ENCODE measurements at regions of chr9 and their contacts with region 1.

Region 1: GRCh38 chr9:89929673-89930480 is 325.1 kb downstream of the GADD45G start:
- DNase-seq: peak in 1 of 3 donors; percentile 36
- ATAC-seq: peak; percentile 65 to 85
- H3K4me3 ChIP-seq: no peak overlapping the region
- H3K27ac ChIP-seq: no peak overlapping the region
- H3K4me1 ChIP-seq: peaks cover 13% of the 10 kb centered on the region
- H3K27me3 ChIP-seq: no peaks in the 10 kb centered on the region

Region 2: DNA sequence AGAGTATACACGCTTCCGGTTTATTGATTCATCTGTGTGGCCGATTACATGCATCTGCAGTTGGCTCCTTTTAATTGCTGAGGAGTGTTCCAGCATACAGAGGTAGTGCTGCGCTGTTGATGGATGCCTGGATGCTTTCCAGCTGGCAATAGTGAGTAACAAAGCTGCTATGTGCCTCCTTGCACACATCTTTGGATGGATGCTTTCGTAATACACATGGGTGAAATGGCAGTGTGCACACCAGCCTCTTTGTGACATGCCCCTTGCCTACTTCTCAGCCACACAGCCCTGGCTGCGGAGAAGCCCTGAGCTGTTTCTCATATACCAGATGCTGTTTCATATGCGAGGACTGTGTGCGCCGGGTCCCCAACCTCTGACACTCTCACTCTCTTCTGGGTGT is 174.1 kb before region 1 on chr9:
- intact Hi-C with region 1: loop called in 1 of 4 experiments (anchors 5 kb)
- DNase-seq: peak in 1 of 3 donors; percentile 59
- ATAC-seq: peak; percentile 48 to 63
- H3K4me3 ChIP-seq: no peak overlapping the region
- H3K27ac ChIP-seq: no peak overlapping the region
- H3K4me1 ChIP-seq: no peaks in the 10 kb centered on the region
- H3K27me3 ChIP-seq: no peaks in the 10 kb centered on the region

Region 3: GRCh38 chr9:90169490-90169889 is 239.6 kb after region 1 on chr9:
- intact Hi-C with region 1: no loop called
- DNase-seq: no peak
- ATAC-seq: no peak
- H3K4me3 ChIP-seq: no peak overlapping the region
- H3K27ac ChIP-seq: no peak overlapping the region
- H3K4me1 ChIP-seq: no peaks in the 10 kb centered on the region
- H3K27me3 ChIP-seq: no peaks in the 10 kb centered on the region

Measured in right cardiac atrium (tissue), 5 donors.